ENCODE measurements at regions of chr15 and their contacts with region 1.

Region 1: GRCh38 chr15:89017370-89018066 is 70.7 kb upstream of the ABHD2 start:
- DNase-seq: no peak
- H3K4me3 ChIP-seq: peak overlapping the region; percentile 21 to 37
- H3K27ac ChIP-seq: peak overlapping the region; percentile 78
- H3K4me1 ChIP-seq: peaks cover 48% of the 10 kb centered on the region
- H3K27me3 ChIP-seq: no peaks in the 10 kb centered on the region
- CTCF ChIP-seq: peak in 2 of 3 experiments; percentile 43 to 72
- POLR2A ChIP-seq: no peak

Region 2: GRCh38 chr15:88913017-88913849 is 104.3 kb before region 1 on chr15 and contains the start of gene MFGE8:
- intact Hi-C with region 1: loop called (anchors 5 kb)
- DNase-seq: no peak
- H3K4me3 ChIP-seq: peak within 1 kb of the TSS; percentile 57 to 83
- H3K27ac ChIP-seq: peak within 1 kb of the TSS; percentile 89
- H3K4me1 ChIP-seq: peaks cover 41% of the 10 kb centered on the region
- H3K27me3 ChIP-seq: no peaks in the 10 kb centered on the region
- CTCF ChIP-seq: no peak
- POLR2A ChIP-seq: peak in 1 of 2 donors; percentile 69
- total RNA-seq, gene MFGE8: 513 TPM

Region 3: GRCh38 chr15:89090791-89091626 is 73.5 kb after region 1 on chr15:
- intact Hi-C with region 1: loop called (anchors 5 kb)
- DNase-seq: no peak
- H3K4me3 ChIP-seq: peak overlapping the region; percentile 24 to 34
- H3K27ac ChIP-seq: peak overlapping the region; percentile 94
- H3K4me1 ChIP-seq: peaks cover 48% of the 10 kb centered on the region
- H3K27me3 ChIP-seq: no peaks in the 10 kb centered on the region
- CTCF ChIP-seq: no peak
- POLR2A ChIP-seq: no peak